Esophagus muscularis mucosa (tissue), 4 donors: ENCODE measurements at regions of chr16 and their contacts with region 1.

Region 1: DNA sequence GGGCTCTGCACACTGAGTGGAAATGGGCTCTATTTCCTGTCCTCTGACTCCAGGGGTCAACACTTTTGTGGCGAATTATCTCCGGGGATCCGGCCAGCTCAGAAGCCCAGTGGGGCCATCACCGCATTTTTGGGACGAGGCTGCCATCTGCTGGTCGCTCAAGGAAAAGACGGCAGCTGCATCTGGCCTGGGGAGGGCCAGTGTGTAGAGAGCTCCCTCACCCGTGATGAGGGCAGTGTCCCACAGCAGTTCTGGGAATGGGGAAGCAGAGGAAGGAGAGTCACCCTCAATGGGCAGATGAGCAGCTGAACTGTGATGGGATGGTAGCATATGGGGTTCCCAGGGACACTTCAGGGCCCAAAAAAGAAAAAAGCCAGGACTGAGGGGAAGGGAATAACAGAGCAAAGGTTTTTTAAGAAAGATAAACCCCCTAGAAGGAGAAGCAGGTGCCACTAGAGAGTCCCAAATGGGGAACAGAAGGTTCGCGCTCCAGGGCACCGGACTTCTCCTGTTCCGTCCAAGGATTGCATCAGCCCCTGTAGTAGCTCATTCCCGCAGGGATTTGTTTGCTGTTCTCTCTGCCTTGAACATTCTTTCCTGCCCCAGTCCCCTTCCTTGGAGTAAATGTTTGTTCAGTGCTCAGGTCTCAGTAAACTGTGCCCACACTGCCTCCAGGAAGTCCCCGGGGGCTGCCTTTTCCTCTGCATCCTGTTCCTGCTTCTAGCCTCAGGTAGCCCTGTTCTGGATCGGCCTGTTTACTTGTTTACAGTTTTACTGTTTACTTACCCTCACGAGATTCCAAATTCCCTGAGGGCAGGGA is 9.3 kb upstream of the ABCC12 start:
- DNase-seq: no peak
- H3K4me3 ChIP-seq: no peak overlapping the region
- H3K27ac ChIP-seq: no peak overlapping the region
- H3K4me1 ChIP-seq: peaks cover 3 to 9% (median 6%) of the 10 kb centered on the region in 4 donors
- H3K27me3 ChIP-seq: peaks cover 0 to 14% (median 0%) of the 10 kb centered on the region in 4 donors
- CTCF ChIP-seq: peak; percentile 72 to 90 (median 77)
- EP300 ChIP-seq: no peak
- POLR2A ChIP-seq: no peak

Region 2: GRCh38 chr16:47037746-47038458 is 1127.2 kb before region 1 on chr16:
- intact Hi-C with region 1: loop called (anchors 5 kb)
- DNase-seq: peak; percentile 96
- H3K4me3 ChIP-seq: peak overlapping the region; percentile 65 to 73 (median 70)
- H3K27ac ChIP-seq: peak overlapping the region in 3 of 4 donors; percentile 64 to 77 (median 65)
- H3K4me1 ChIP-seq: peaks cover 0 to 14% (median 13%) of the 10 kb centered on the region in 4 donors
- H3K27me3 ChIP-seq: peaks cover 0 to 5% (median 0%) of the 10 kb centered on the region in 4 donors
- CTCF ChIP-seq: peak; percentile 82 to 99 (median 93)
- EP300 ChIP-seq: no peak
- POLR2A ChIP-seq: no peak